Right ventricle myocardium superior (tissue), 1 donor: ENCODE measurements at regions of chr18 and their contacts with region 1.

Region 1: GRCh38 chr18:56748698-56749268 is 97.6 kb downstream of the WDR7 start:
- DNase-seq: no peak
- ATAC-seq: peak; percentile 36

Region 2: GRCh38 chr18:56711708-56712445 is 36.9 kb before region 1 on chr18:
- intact Hi-C with region 1: no loop called
- DNase-seq: no peak
- ATAC-seq: no peak

Region 3: GRCh38 chr18:57561728-57562423 is 813.1 kb after region 1 on chr18:
- intact Hi-C with region 1: loop called (anchors 5 kb)
- DNase-seq: no peak
- ATAC-seq: peak; percentile 68